ENCODE measurements at regions of chr3 and their contacts with region 1.

Region 1: GRCh38 chr3:71064288-71064955 is 519.1 kb downstream of the FOXP1 start:
- DNase-seq: peak; percentile 65
- H3K4me3 ChIP-seq: peak overlapping the region; percentile 62 to 83 (median 63)
- H3K27ac ChIP-seq: peak overlapping the region; percentile 98
- H3K4me1 ChIP-seq: peaks cover 59% of the 10 kb centered on the region
- H3K27me3 ChIP-seq: no peaks in the 10 kb centered on the region
- CTCF ChIP-seq: peak in 1 of 2 donors; percentile 6

Region 2: GRCh38 chr3:70716832-70717231 is 347.6 kb before region 1 on chr3:
- CTCF ChIA-PET with region 1: no interaction called
- dilution Hi-C with region 1: no loop called
- in situ Hi-C with region 1: loop called in 1 of 2 experiments (anchors 10 kb)
- intact Hi-C with region 1: loop called (anchors 1 kb)
- DNase-seq: peak; percentile 3
- H3K4me3 ChIP-seq: no peak overlapping the region
- H3K27ac ChIP-seq: no peak overlapping the region
- H3K4me1 ChIP-seq: no peaks in the 10 kb centered on the region
- H3K27me3 ChIP-seq: no peaks in the 10 kb centered on the region
- CTCF ChIP-seq: peak; percentile 21 to 47

Region 3: GRCh38 chr3:70982700-70983140 is 81.7 kb before region 1 on chr3:
- CTCF ChIA-PET with region 1: no interaction called
- dilution Hi-C with region 1: loop called (anchors 5 kb)
- in situ Hi-C with region 1: no loop called
- intact Hi-C with region 1: no loop called
- DNase-seq: peak; percentile 97
- H3K4me3 ChIP-seq: peak overlapping the region in 2 of 3 experiments; percentile 1 to 2
- H3K27ac ChIP-seq: peak overlapping the region; percentile 95
- H3K4me1 ChIP-seq: peaks cover 17% of the 10 kb centered on the region
- H3K27me3 ChIP-seq: no peaks in the 10 kb centered on the region
- CTCF ChIP-seq: no peak

Region 4: DNA sequence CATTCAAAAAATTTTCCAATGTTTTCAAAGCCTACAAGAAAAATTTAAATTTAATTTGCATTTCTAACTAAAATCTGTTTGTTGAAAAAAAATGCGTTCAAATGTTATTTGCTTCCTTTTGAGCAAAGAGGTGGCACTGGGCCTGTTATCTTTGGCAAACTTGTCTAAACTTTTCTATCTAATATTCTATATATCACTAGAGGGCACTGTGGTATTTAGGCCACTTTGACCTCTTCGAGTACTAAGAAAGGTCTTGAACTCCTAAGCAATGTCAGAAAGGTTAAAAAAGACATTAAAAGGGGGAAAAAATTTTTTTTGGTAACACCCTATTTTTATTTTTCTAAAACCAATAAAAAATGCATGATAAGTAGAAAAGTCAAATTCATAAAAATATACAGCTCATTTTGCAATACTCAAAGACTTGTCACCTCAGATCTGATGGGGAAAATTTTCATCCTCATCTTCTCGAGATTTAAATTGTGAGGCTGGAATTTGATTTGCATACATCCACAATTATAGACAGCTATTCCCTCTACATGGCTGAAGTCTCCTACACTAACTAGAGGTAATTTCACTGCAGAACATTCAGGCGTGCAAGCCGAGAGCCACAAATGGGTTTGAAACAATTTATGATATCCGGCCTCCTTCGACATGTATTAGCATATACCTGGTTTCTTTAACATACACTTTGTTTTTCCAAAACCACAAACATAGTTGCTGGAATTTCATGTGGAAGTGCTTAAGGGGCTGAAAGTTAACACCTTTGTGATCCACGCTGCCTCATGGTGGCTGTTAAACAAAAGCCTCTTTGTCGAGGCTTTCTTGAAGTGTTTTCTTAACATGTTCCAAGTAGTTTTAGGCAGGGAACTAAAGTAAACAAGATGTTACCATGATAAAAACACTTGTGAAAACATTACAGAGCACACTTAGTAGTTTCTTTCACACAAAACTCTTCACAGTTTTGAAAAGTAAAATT is 57.3 kb before region 1 on chr3:
- CTCF ChIA-PET with region 1: interaction called, 4 read pairs
- dilution Hi-C with region 1: no loop called
- in situ Hi-C with region 1: no loop called
- intact Hi-C with region 1: loop called (anchors 2 kb)
- DNase-seq: peak; percentile 93
- H3K4me3 ChIP-seq: no peak overlapping the region
- H3K27ac ChIP-seq: peak overlapping the region; percentile 91
- H3K4me1 ChIP-seq: peaks cover 33% of the 10 kb centered on the region
- H3K27me3 ChIP-seq: no peaks in the 10 kb centered on the region
- CTCF ChIP-seq: peak; percentile 27 to 56

Region 5: GRCh38 chr3:71247221-71247976 is 183.0 kb after region 1 on chr3:
- CTCF ChIA-PET with region 1: no interaction called
- dilution Hi-C with region 1: no loop called
- in situ Hi-C with region 1: no loop called
- intact Hi-C with region 1: loop called (anchors 2 kb)
- DNase-seq: peak; percentile 61
- H3K4me3 ChIP-seq: no peak overlapping the region
- H3K27ac ChIP-seq: no peak overlapping the region
- H3K4me1 ChIP-seq: no peaks in the 10 kb centered on the region
- H3K27me3 ChIP-seq: no peaks in the 10 kb centered on the region
- CTCF ChIP-seq: no peak

Region 6: GRCh38 chr3:71444028-71444860 is 379.8 kb after region 1 on chr3:
- CTCF ChIA-PET with region 1: no interaction called
- dilution Hi-C with region 1: no loop called
- in situ Hi-C with region 1: no loop called
- intact Hi-C with region 1: loop called (anchors 5 kb)
- DNase-seq: peak; percentile 97
- H3K4me3 ChIP-seq: peak overlapping the region in 1 of 3 experiments; percentile 4
- H3K27ac ChIP-seq: peak overlapping the region; percentile 93
- H3K4me1 ChIP-seq: peaks cover 54% of the 10 kb centered on the region
- H3K27me3 ChIP-seq: no peaks in the 10 kb centered on the region
- CTCF ChIP-seq: no peak

Measured in mammary epithelial cell (primary cell).